ENCODE measurements at regions of chr3 and their contacts with region 1.

Region 1: DNA sequence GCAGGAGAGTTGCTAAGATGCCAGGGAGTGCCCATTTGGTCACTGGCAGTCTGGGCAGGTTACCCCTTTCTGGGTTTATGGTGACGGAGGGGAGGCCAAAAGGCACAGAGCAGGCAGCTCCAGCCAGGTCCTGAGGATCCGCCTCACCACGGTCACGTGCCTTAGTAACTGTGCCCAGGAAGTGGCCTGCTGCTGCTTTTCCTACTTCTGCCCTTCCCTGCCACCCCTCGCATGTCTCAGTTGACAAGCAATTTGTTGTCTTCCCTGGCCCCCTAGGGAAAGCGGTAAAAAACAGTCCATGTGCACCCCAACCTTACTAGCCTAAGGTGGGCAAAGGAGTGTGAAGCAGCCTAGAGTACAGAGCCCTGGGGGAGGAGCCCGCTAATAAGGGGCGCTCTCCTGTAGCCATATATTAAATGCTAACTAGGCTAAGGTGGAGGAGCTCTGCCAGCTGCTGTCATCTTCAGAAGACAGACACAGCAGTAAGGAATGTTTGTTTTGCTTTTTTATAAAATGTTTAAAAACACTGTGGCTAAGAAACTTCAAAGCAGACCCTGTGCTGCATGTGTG is 9.1 kb upstream of the LIPH start:
- H3K4me3 ChIP-seq: no peak overlapping the region
- H3K27ac ChIP-seq: no peak overlapping the region
- H3K4me1 ChIP-seq: peaks cover 3% of the 10 kb centered on the region; the same call in 1 of the 2 replicates
- CTCF ChIP-seq: no peak

Region 2: GRCh38 chr3:185353823-185354614 is 207.4 kb before region 1 on chr3:
- CTCF ChIA-PET with region 1: interaction called, 12 read pairs
- POLR2A ChIA-PET with region 1: no interaction called
- H3K4me3 ChIP-seq: no peak overlapping the region
- H3K27ac ChIP-seq: no peak overlapping the region
- H3K4me1 ChIP-seq: no peaks in the 10 kb centered on the region
- CTCF ChIP-seq: no peak

Region 3: DNA sequence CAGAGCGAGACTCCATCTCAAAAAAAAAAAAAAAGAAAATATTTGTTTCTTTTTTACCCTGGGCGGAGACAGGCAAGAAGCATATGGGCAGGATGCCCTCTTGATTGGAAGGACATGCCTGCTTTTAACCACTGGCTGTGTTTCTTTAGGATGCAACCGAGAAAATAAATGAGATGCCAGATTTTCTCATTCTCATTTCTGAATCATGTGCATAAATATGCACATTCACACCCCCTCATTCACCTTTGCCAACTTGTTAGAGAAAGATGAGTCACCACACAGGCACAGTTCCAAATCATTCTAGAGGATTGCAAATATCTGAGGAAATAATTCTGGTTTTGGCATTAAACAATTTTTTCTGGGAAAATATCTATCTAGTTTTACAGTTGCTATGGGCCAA is 12.3 kb before region 1 on chr3:
- CTCF ChIA-PET with region 1: interaction called, 10 read pairs
- POLR2A ChIA-PET with region 1: no interaction called
- H3K4me3 ChIP-seq: no peak overlapping the region
- H3K27ac ChIP-seq: no peak overlapping the region
- H3K4me1 ChIP-seq: no peaks in the 10 kb centered on the region
- CTCF ChIP-seq: no peak

Region 4: DNA sequence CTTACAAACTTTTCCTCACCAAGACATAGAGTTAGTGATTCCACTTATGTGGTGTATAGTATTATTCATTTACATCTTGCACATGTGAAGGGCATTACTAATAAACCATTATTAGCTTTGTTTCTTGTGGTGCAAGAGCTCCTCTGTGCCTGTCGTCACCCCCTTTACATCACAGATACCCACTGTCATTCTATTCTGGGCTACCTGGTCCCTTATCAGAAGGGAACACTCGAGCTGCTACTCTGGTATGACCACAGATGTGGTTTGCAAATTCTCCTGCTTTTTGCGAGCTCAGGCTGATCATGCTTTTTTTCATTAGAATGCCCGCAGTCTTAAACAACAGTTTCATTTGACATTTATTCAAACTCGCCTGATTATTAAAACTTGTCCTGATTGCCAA is 10.7 kb after region 1 on chr3:
- CTCF ChIA-PET with region 1: interaction called, 30 read pairs
- POLR2A ChIA-PET with region 1: no interaction called
- H3K4me3 ChIP-seq: no peak overlapping the region
- H3K27ac ChIP-seq: no peak overlapping the region
- H3K4me1 ChIP-seq: no peaks in the 10 kb centered on the region
- CTCF ChIP-seq: no peak

Region 5: GRCh38 chr3:185667574-185667973 is 106.1 kb after region 1 on chr3:
- CTCF ChIA-PET with region 1: no interaction called
- POLR2A ChIA-PET with region 1: no interaction called
- H3K4me3 ChIP-seq: no peak overlapping the region
- H3K27ac ChIP-seq: no peak overlapping the region
- H3K4me1 ChIP-seq: no peaks in the 10 kb centered on the region
- CTCF ChIP-seq: no peak

Measured in HEK293 (cell line).